Astrocyte of the cerebellum (primary cell): ENCODE measurements at regions of chr20 and their contacts with region 1.

Region 1: GRCh38 chr20:57514273-57514751 is 10.6 kb downstream of the CTCFL start:
- DNase-seq: peak; percentile 47
- H3K4me3 ChIP-seq: no peak overlapping the region
- CTCF ChIP-seq: peak; percentile 79

Region 2: GRCh38 chr20:57560554-57561355 is 46.4 kb after region 1 on chr20 and contains the start of gene PCK1:
- in situ Hi-C with region 1: loop called (anchors 5 kb)
- DNase-seq: no peak
- H3K4me3 ChIP-seq: no peak within 1 kb of the TSS
- CTCF ChIP-seq: no peak

Region 3: GRCh38 chr20:57609861-57610205 is 95.5 kb after region 1 on chr20:
- in situ Hi-C with region 1: loop called (anchors 5 kb)
- DNase-seq: no peak
- H3K4me3 ChIP-seq: no peak overlapping the region
- CTCF ChIP-seq: no peak

Region 4: DNA sequence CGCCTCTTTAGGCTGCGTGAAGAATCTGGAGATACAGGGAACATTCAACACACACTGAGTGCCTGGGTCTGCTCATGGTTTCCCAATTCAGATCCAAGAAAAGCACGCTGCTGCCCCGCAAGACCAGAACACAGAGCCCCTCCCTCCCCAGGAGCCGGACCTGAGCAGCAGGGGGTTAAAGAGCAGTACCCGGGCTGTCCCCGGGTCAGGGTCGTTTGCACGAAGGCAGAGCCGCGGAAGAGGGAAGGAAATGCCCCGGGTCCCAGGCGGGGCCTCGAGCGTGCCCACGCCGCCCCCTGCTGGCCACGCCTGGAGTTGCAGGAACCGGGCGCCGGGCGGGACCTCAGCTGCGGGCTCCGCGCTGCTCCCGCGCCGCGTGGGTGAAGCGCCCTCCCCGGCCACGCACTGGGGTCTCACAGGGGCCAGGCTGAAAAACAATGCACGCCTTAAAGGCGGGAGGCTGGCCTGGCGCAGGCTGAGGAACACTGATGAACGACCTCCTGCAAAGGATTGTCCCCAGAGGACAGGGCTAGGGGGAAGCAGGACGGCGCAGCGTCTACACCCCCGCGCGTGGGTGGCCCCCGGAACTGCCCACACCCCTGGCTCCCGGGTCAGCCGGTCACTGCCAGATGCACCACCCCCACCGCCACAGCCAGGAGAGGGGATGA is 665.3 kb after region 1 on chr20:
- in situ Hi-C with region 1: loop called (anchors 25 kb)
- DNase-seq: peak; percentile 15
- H3K4me3 ChIP-seq: peak overlapping the region; percentile 14
- CTCF ChIP-seq: peak; percentile 87

Region 5: DNA sequence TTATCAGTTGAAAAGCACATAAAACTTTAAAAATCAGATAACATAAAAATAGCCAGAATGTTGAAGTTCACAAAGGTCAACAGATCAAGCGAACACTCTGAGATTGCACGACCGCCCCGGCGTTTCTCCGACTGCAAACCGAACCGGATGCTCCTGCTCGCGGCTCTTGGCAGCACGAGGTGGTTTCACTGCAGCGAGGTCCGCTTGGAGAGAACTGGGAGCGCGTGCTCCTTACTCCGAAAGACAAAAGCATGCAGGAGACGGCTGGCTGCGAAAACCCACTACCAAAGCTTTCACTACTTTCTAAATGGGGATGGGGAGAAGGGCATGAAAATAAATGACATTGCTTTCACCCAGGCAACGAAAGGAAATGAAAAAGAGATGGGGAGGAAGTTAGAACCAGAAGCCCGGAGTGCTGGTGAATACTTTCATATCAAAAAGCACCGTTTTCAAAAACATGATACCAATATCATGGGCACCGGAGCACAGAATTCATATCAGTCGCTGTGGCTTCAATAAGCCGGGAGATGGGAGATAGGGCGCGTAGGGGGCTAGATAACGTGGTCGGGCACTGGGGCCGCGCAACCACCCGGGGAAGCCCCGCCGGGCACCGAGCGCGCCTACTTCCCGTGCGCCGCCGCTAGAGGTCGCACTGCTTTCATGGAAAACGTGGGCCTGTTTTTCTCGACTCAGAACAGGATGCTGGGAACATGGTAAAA is 722.5 kb after region 1 on chr20:
- in situ Hi-C with region 1: loop called (anchors 5 kb)
- DNase-seq: peak; percentile 27
- H3K4me3 ChIP-seq: peak overlapping the region; percentile 43
- CTCF ChIP-seq: peak; percentile 96